Prostate gland (tissue), 2 donors: ENCODE measurements at regions of chr1 and their contacts with region 1.

Region 1: GRCh38 chr1:42173155-42173933 is 8.8 kb upstream of the GUCA2A start:
- DNase-seq: peak; percentile 49
- H3K4me3 ChIP-seq: no peak overlapping the region
- H3K27ac ChIP-seq: peak overlapping the region; percentile 74 to 82
- H3K4me1 ChIP-seq: peaks cover 22% of the 10 kb centered on the region
- H3K27me3 ChIP-seq: no peaks in the 10 kb centered on the region
- CTCF ChIP-seq: peak; percentile 87 to 93 (median 89)
- POLR2A ChIP-seq: no peak

Region 2: GRCh38 chr1:41573785-41574713 is 599.3 kb before region 1 on chr1:
- intact Hi-C with region 1: loop called (anchors 2 kb)
- DNase-seq: peak; percentile 80
- H3K4me3 ChIP-seq: no peak overlapping the region
- H3K27ac ChIP-seq: no peak overlapping the region
- H3K4me1 ChIP-seq: no peaks in the 10 kb centered on the region
- H3K27me3 ChIP-seq: no peaks in the 10 kb centered on the region
- CTCF ChIP-seq: peak; percentile 33 to 88 (median 76)
- POLR2A ChIP-seq: no peak

Region 3: GRCh38 chr1:42035830-42036604 is 137.3 kb before region 1 on chr1:
- intact Hi-C with region 1: loop called (anchors 10 kb)
- DNase-seq: peak; percentile 95
- H3K4me3 ChIP-seq: peak overlapping the region; percentile 70 to 96
- H3K27ac ChIP-seq: peak overlapping the region; percentile 78 to 85
- H3K4me1 ChIP-seq: no peaks in the 10 kb centered on the region
- H3K27me3 ChIP-seq: no peaks in the 10 kb centered on the region
- CTCF ChIP-seq: no peak
- POLR2A ChIP-seq: peak; percentile 46

Region 4: GRCh38 chr1:42335050-42335808 is 161.9 kb after region 1 on chr1 and contains the start of gene FOXJ3:
- intact Hi-C with region 1: loop called (anchors 5 kb)
- DNase-seq: peak; percentile 92
- H3K4me3 ChIP-seq: peak within 1 kb of the TSS; percentile 95 to 98
- H3K27ac ChIP-seq: peak within 1 kb of the TSS; percentile 94 to 96
- H3K4me1 ChIP-seq: peaks cover 4% of the 10 kb centered on the region
- H3K27me3 ChIP-seq: no peaks in the 10 kb centered on the region
- CTCF ChIP-seq: peak in 2 of 4 experiments; percentile 21 to 42
- POLR2A ChIP-seq: peak; percentile 54
- total RNA-seq, gene FOXJ3: 54.1 to 58.5 TPM

Region 5: GRCh38 chr1:42456010-42456758 is 282.8 kb after region 1 on chr1 and contains the starts of genes PPCS and ZMYND12:
- intact Hi-C with region 1: loop called (anchors 10 kb)
- DNase-seq: peak; percentile 83
- H3K4me3 ChIP-seq: peak within 1 kb of the TSS; percentile 88 to 97
- H3K27ac ChIP-seq: peak within 1 kb of the TSS; percentile 87 to 92
- H3K4me1 ChIP-seq: peaks cover 5% of the 10 kb centered on the region
- H3K27me3 ChIP-seq: no peaks in the 10 kb centered on the region
- CTCF ChIP-seq: peak in 2 of 4 experiments; percentile 38 to 46
- POLR2A ChIP-seq: peak; percentile 60
- total RNA-seq, gene PPCS: 71.2 to 101 TPM
- total RNA-seq, gene ZMYND12: 2.0 to 12.7 TPM